ENCODE measurements at regions of chr3 and their contacts with region 1.

Region 1: GRCh38 chr3:30658328-30659052 is 52.1 kb downstream of the TGFBR2 start:
- DNase-seq: peak; percentile 73
- H3K4me3 ChIP-seq: peak overlapping the region; percentile 28
- H3K27ac ChIP-seq: peak overlapping the region; percentile 77
- H3K4me1 ChIP-seq: peaks cover 76% of the 10 kb centered on the region
- CTCF ChIP-seq: no peak

Region 2: DNA sequence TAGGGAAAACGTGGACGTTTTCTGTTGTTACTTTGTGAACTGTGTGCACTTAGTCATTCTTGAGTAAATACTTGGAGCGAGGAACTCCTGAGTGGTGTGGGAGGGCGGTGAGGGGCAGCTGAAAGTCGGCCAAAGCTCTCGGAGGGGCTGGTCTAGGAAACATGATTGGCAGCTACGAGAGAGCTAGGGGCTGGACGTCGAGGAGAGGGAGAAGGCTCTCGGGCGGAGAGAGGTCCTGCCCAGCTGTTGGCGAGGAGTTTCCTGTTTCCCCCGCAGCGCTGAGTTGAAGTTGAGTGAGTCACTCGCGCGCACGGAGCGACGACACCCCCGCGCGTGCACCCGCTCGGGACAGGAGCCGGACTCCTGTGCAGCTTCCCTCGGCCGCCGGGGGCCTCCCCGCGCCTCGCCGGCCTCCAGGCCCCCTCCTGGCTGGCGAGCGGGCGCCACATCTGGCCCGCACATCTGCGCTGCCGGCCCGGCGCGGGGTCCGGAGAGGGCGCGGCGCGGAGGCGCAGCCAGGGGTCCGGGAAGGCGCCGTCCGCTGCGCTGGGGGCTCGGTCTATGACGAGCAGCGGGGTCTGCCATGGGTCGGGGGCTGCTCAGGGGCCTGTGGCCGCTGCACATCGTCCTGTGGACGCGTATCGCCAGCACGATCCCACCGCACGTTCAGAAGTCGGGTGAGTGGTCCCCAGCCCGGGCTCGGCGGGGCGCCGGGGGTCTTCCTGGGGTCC is 52.0 kb before region 1 on chr3 and contains the start of gene TGFBR2:
- CTCF ChIA-PET with region 1: interaction called, 4 read pairs
- POLR2A ChIA-PET with region 1: interaction called, 10 read pairs
- intact Hi-C with region 1: no loop called
- DNase-seq: peak; percentile 91
- H3K4me3 ChIP-seq: peak within 1 kb of the TSS; percentile 94
- H3K27ac ChIP-seq: peak within 1 kb of the TSS; percentile 93
- H3K4me1 ChIP-seq: peaks cover 72% of the 10 kb centered on the region
- CTCF ChIP-seq: no peak; the same call in 1 of the 2 replicates
- total RNA-seq, gene TGFBR2: 28.1 and 29.6 TPM in 2 replicates